Activated B cell treated with CpG ODN at 0.5 μM for 24 hours (primary cell): ENCODE measurements at regions of chr17 and their contacts with region 1.

Region 1: GRCh38 chr17:43024407-43025289 is at the start of gene RND2:
- DNase-seq: peak; percentile 79
- ATAC-seq: peak; percentile 65
- H3K4me3 Mint-ChIP-seq: peak within 1 kb of the TSS; percentile 92
- H3K27ac Mint-ChIP-seq: peak within 1 kb of the TSS; percentile 87
- H3K4me1 Mint-ChIP-seq: peaks cover 24% of the 10 kb centered on the region
- H3K27me3 Mint-ChIP-seq: no peaks in the 10 kb centered on the region
- CTCF ChIP-seq: no peak
- total RNA-seq, gene RND2: 0.05 and 0.13 TPM in 2 replicates

Region 2: DNA sequence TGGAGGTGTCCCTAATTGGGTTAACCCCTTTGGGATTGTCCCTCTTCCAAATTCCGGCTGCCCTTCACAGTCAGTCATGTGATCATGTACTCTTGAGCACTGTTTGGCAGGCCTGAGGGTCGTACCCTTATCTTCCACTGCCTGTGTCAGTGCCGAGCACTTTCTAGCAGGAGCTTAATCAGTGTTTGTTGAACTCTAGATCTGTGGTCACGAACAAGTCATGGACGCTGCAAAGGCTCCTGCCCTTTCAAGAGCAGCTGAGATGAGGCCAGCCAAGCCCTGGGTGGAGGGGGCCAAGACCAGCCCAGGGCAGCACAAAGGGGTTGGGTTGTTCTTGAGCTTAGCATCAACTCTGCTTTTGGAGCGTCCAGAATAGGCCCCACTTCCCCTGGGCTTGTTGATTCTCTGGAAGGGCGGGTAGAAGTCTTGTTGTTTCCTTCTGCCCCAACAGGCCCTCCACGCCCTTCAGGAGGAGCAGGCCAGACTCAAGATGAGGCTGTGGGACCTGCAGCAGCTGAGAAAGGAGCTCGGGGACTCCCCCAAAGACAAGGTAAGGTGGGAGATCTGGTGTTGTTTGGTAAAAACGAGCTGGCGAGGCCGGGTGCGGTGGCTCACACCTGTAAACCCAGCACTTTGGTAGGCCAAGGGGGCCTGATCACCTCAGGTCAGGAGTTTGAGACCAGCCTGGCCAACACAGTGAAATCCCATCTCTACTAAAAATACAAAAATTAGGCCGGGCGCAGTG is 12.7 kb before region 1 on chr17:
- CTCF ChIA-PET with region 1: interaction called, 5 read pairs
- POLR2A ChIA-PET with region 1: interaction called, 22 read pairs
- intact Hi-C with region 1: loop called (anchors 2 kb)
- DNase-seq: no peak
- ATAC-seq: no peak
- H3K4me3 Mint-ChIP-seq: no peak overlapping the region
- H3K27ac Mint-ChIP-seq: no peak overlapping the region
- H3K4me1 Mint-ChIP-seq: peaks cover 9% of the 10 kb centered on the region
- H3K27me3 Mint-ChIP-seq: no peaks in the 10 kb centered on the region
- CTCF ChIP-seq: no peak

Region 3: GRCh38 chr17:43170766-43171585 is 146.3 kb after region 1 on chr17 and contains the start of gene NBR1:
- CTCF ChIA-PET with region 1: interaction called, 4 read pairs
- POLR2A ChIA-PET with region 1: interaction called, 26 read pairs
- intact Hi-C with region 1: loop called (anchors 1 kb)
- DNase-seq: peak; percentile 86
- ATAC-seq: peak; percentile 74
- H3K4me3 Mint-ChIP-seq: no peak within 1 kb of the TSS
- H3K27ac Mint-ChIP-seq: no peak within 1 kb of the TSS
- H3K4me1 Mint-ChIP-seq: peaks cover 13% of the 10 kb centered on the region
- H3K27me3 Mint-ChIP-seq: no peaks in the 10 kb centered on the region
- CTCF ChIP-seq: no peak
- total RNA-seq, gene NBR1: 42.2 and 44.8 TPM in 2 replicates

Region 4: DNA sequence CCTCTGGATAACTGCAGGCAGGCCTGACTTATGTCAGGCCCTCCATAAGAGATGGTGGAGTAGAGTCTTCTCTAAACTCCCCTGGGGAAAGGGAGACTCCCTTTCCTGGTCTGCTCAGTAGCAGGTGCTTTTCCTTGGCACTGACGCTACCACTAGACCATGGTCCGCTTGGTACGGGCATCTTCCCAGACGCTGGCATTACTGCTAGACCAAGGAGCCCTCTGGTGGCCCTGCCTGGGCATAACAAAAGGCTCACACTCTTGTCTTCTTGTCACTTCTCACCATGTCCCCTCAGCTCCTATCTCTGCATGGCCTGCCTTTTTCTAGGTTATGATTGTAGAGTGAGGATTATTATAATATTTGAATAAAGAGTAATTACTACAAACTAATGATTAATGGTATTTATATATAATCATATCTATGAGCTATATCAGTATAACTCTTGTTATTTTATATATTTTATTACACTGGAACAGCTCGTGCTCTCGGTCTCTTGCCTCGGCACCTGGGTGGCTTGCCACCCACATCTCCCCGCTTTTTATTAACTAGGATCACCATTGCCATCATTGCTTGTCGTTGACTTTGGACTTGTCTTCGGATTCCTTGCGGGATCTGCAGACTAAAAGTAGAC is 314.4 kb after region 1 on chr17:
- CTCF ChIA-PET with region 1: no interaction called
- POLR2A ChIA-PET with region 1: interaction called, 5 read pairs
- intact Hi-C with region 1: loop called (anchors 1 kb)
- DNase-seq: peak; percentile 47
- ATAC-seq: no peak
- H3K4me3 Mint-ChIP-seq: no peak overlapping the region
- H3K27ac Mint-ChIP-seq: no peak overlapping the region
- H3K4me1 Mint-ChIP-seq: peaks cover 18% of the 10 kb centered on the region
- H3K27me3 Mint-ChIP-seq: no peaks in the 10 kb centered on the region
- CTCF ChIP-seq: peak; percentile 38